B cell (primary cell): ENCODE measurements at regions of chr18 and their contacts with region 1.

Region 1: GRCh38 chr18:48445540-48445939 is 36.4 kb upstream of the ZBTB7C start:
- DNase-seq: peak; percentile 62
- ATAC-seq: peak; percentile 58
- H3K4me3 ChIP-seq: no peak overlapping the region
- H3K4me3 Mint-ChIP-seq: no peak overlapping the region
- H3K27ac ChIP-seq: no peak overlapping the region
- H3K27ac Mint-ChIP-seq: no peak overlapping the region
- H3K4me1 ChIP-seq: no peaks in the 10 kb centered on the region
- H3K4me1 Mint-ChIP-seq: peaks cover 2% of the 10 kb centered on the region
- H3K27me3 ChIP-seq: peaks cover 0 to 17% (median 3%) of the 10 kb centered on the region in 4 experiments
- H3K27me3 Mint-ChIP-seq: peaks cover 21% of the 10 kb centered on the region
- CTCF ChIP-seq: peak; percentile 86

Region 2: DNA sequence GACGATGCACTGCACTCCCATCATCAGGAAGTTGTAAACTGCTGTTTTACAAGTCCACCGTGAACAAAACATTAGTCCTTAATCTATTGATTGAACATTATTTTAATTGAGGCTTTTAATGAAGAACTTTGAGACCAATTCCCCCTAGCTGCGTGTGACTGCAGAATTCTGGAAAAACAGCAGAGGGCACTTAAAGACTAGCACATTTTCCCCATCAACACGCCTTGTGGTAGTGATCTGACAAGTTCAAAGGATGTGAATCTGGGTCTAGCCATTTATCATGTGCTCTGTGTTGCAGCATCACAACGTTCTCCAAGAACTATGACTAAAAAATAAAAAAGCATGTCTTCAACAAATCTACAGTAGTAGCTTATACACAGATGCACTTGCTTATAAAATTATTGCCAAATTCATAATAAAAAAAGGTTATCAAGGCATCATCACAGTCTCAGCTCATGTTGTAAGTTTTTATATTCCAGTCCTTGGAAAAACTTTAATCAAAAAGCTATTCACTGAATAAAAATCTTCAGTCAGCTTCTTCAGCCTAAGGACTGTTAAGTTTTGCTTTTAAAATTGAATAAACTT is 1229.9 kb before region 1 on chr18:
- CTCF ChIA-PET with region 1: no interaction called
- POLR2A ChIA-PET with region 1: no interaction called
- intact Hi-C with region 1: loop called (anchors 10 kb)
- DNase-seq: peak; percentile 19
- ATAC-seq: no peak
- H3K4me3 ChIP-seq: no peak overlapping the region
- H3K4me3 Mint-ChIP-seq: no peak overlapping the region
- H3K27ac ChIP-seq: no peak overlapping the region
- H3K27ac Mint-ChIP-seq: no peak overlapping the region
- H3K4me1 ChIP-seq: no peaks in the 10 kb centered on the region
- H3K4me1 Mint-ChIP-seq: no peaks in the 10 kb centered on the region
- H3K27me3 ChIP-seq: peaks cover 0 to 19% (median 4%) of the 10 kb centered on the region in 4 experiments
- H3K27me3 Mint-ChIP-seq: peaks cover 49% of the 10 kb centered on the region
- CTCF ChIP-seq: peak; percentile 57

Region 3: DNA sequence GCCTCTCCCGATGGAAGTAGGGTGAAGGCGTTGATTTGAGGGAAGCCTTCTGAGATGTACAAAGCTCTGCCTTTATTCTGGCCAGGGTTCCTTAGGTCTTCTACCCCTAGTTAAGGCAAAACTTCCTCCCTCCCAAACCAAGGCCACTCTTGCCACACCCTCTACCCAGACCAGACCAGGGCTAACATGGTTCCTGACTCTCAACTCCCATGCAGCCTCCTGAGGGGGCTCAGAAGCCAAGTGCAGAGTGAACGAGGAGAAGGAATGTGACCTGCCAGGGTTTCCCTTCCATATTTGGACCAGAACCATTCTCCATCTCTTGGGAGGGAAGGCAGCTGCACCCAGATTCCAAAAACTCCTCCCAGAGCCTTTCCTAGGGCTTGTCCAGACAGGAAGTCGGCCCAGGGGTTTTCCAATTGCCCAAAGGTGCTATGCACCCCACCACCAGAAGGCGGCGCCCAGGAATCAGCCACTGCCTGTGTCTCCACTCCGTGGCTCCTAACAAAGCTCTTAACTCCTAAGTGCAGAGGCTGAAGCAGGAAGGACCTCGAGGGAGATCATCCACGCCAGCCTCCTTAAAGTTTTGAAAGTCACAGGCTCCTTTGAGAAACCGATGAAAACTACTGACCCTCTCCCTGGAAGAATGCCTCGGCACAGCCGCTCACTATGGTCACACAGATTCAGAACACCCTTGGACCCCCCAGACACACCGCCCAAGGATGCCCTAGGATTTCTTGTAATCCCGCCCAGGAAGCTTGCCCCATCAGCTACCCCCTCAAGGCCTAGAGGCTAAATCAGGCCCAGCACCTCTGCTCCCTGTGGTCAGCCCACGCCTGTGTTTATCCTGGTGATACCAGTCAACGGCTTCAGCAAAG is 672.9 kb before region 1 on chr18:
- CTCF ChIA-PET with region 1: interaction called, 17 read pairs
- POLR2A ChIA-PET with region 1: no interaction called
- intact Hi-C with region 1: no loop called
- DNase-seq: peak; percentile 52
- ATAC-seq: peak; percentile 47
- H3K4me3 ChIP-seq: no peak overlapping the region
- H3K4me3 Mint-ChIP-seq: no peak overlapping the region
- H3K27ac ChIP-seq: no peak overlapping the region
- H3K27ac Mint-ChIP-seq: no peak overlapping the region
- H3K4me1 ChIP-seq: no peaks in the 10 kb centered on the region
- H3K4me1 Mint-ChIP-seq: no peaks in the 10 kb centered on the region
- H3K27me3 ChIP-seq: peaks cover 0 to 7% (median under 1%) of the 10 kb centered on the region in 4 experiments
- H3K27me3 Mint-ChIP-seq: peaks cover 28% of the 10 kb centered on the region
- CTCF ChIP-seq: peak; percentile 90

Region 4: DNA sequence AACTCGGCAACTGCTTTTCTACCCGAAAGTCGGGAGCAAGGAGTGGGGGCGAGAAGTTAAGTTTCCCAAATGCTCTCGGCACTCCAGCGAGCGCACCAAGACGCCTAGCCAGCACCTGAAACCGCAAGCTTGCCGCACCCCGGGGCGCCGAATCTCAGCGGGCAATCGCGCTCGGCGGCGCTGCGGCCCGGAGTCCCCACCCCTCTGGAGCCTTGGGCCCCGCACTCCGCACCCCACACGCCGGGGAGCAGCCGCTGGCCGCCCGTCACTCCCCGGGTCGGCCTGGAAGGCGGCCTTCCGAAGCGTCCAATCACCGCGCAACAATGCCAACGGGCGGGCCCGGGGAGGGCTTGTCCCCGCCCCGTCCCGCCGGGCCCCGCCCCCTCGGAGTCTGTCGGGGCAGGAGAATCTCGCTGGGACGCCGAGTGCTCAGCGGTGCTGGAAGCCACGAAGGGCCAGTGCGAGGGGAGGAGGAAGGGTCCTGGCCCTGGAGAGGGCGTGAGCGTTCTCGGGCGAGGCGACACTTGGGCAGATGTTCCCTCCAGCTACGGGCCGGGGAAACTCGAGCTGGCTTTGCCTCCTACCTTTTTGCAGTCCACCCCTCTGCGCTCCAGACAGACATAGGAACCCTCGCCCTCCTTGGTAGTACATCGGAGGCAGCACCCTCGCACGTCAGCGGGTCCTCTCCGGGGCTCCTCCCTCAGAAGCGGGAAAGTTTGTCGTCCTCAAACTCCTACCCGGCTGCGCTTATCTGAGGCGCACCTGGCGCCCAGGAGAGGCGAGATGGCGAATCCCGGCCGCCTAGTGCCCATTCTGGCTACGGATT is 35.2 kb before region 1 on chr18:
- CTCF ChIA-PET with region 1: no interaction called
- POLR2A ChIA-PET with region 1: no interaction called
- intact Hi-C with region 1: no loop called
- DNase-seq: peak; percentile 59
- ATAC-seq: peak; percentile 85
- H3K4me3 ChIP-seq: peak overlapping the region; percentile 37 to 63 (median 55)
- H3K4me3 Mint-ChIP-seq: peak overlapping the region; percentile 68
- H3K27ac ChIP-seq: no peak overlapping the region
- H3K27ac Mint-ChIP-seq: no peak overlapping the region
- H3K4me1 ChIP-seq: peaks cover 12 to 13% of the 10 kb centered on the region in 2 donors
- H3K4me1 Mint-ChIP-seq: peaks cover 14% of the 10 kb centered on the region
- H3K27me3 ChIP-seq: peaks cover 0 to 53% (median 30%) of the 10 kb centered on the region in 4 experiments
- H3K27me3 Mint-ChIP-seq: peaks cover 68% of the 10 kb centered on the region
- CTCF ChIP-seq: no peak

Region 5: GRCh38 chr18:48428475-48429177 is 16.9 kb before region 1 on chr18:
- CTCF ChIA-PET with region 1: interaction called, 17 read pairs
- POLR2A ChIA-PET with region 1: no interaction called
- intact Hi-C with region 1: no loop called
- DNase-seq: no peak
- ATAC-seq: no peak
- H3K4me3 ChIP-seq: no peak overlapping the region
- H3K4me3 Mint-ChIP-seq: no peak overlapping the region
- H3K27ac ChIP-seq: no peak overlapping the region
- H3K27ac Mint-ChIP-seq: no peak overlapping the region
- H3K4me1 ChIP-seq: no peaks in the 10 kb centered on the region
- H3K4me1 Mint-ChIP-seq: no peaks in the 10 kb centered on the region
- H3K27me3 ChIP-seq: peaks cover 0 to 25% (median 5%) of the 10 kb centered on the region in 4 experiments
- H3K27me3 Mint-ChIP-seq: peaks cover 61% of the 10 kb centered on the region
- CTCF ChIP-seq: no peak

Region 6: GRCh38 chr18:48455555-48456478 is 10.3 kb after region 1 on chr18:
- CTCF ChIA-PET with region 1: interaction called, 15 read pairs
- POLR2A ChIA-PET with region 1: no interaction called
- intact Hi-C with region 1: no loop called
- DNase-seq: no peak
- ATAC-seq: no peak
- H3K4me3 ChIP-seq: no peak overlapping the region
- H3K4me3 Mint-ChIP-seq: no peak overlapping the region
- H3K27ac ChIP-seq: no peak overlapping the region
- H3K27ac Mint-ChIP-seq: no peak overlapping the region
- H3K4me1 ChIP-seq: no peaks in the 10 kb centered on the region
- H3K4me1 Mint-ChIP-seq: no peaks in the 10 kb centered on the region
- H3K27me3 ChIP-seq: peaks cover 0 to 22% (median 5%) of the 10 kb centered on the region in 4 experiments
- H3K27me3 Mint-ChIP-seq: peaks cover 42% of the 10 kb centered on the region
- CTCF ChIP-seq: no peak

Region 7: DNA sequence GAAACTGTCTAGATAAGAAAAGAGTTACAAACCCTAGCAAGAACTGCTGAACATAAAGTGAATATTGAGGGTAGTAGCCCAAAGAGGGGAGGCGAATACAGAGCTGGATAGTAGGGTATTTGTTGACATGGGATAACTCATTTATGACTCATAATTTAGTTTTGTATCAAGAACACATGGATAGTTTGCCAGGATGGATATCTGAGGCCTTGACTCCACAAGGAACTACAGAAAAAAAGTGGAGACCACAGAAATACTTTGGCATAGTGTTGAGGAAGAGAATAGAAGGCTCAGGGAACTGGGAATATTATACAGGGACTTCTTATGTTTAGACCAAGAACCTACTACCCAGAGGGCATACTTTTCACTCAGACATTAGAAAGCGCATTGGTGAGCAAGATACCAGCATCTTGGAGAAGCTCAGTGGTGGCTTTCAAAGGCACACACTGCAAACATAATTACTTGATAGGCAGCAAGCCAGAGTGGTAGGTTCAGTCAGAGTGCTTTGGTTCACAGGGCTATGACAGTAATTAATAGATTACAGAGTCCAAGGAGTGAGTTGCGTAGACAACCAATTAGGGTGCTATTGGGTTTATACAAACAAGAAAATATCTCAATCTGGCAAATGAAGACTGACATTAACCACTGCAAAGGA is 15.5 kb after region 1 on chr18:
- CTCF ChIA-PET with region 1: interaction called, 15 read pairs
- POLR2A ChIA-PET with region 1: no interaction called
- intact Hi-C with region 1: no loop called
- DNase-seq: no peak
- ATAC-seq: no peak
- H3K4me3 ChIP-seq: no peak overlapping the region
- H3K4me3 Mint-ChIP-seq: no peak overlapping the region
- H3K27ac ChIP-seq: no peak overlapping the region
- H3K27ac Mint-ChIP-seq: no peak overlapping the region
- H3K4me1 ChIP-seq: no peaks in the 10 kb centered on the region
- H3K4me1 Mint-ChIP-seq: no peaks in the 10 kb centered on the region
- H3K27me3 ChIP-seq: peaks cover 0 to 10% (median 5%) of the 10 kb centered on the region in 4 experiments
- H3K27me3 Mint-ChIP-seq: peaks cover 24% of the 10 kb centered on the region
- CTCF ChIP-seq: no peak